ENCODE measurements at regions of chr16 and their contacts with region 1.

Region 1: GRCh38 chr16:30657866-30658730 is at the start of gene FBRS:
- DNase-seq: peak; percentile 99 to 100 (median 100)

Region 2: DNA sequence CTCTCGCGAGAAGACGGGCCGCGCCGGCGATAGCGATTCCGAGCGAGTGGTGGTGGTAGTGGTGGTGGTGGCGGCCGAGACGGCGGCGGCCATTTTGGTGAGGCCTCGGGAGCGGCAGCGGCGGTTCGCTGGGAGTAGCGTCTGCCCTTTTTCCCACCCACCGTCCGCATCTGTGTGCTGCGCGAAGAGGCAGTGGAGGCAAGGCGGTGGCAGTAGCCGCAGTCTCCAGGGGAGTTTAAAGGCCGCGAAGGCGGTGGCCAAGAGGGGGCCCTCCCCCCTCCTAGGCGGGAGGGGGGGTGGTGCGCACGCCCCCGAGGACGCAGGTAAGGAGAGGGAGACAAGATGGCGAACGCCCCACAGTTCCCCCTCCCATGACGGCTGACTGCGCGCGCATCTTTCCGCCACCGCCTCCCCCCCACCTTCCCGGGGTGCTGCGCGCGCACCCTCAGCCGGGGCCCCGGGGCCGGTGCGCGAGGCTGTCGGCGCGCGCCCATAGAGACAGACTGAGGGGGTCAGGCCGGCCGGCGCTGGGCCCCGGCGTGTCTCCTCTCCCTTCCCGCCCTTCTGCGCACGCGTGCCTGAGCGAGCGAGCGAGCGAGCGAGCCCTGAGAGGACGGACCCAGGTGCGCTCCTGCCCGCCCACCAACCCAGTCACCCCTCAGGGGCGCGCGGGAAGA is 40.2 kb after region 1 on chr16:
- intact Hi-C with region 1: loop called (anchors 1 kb)
- DNase-seq: peak; percentile 79 to 99 (median 84)

Region 3: GRCh38 chr16:31022544-31023251 is 364.6 kb after region 1 on chr16:
- intact Hi-C with region 1: no loop called
- DNase-seq: peak in 1 of 10 donors; percentile 35